AG04450 (cell line): ENCODE measurements at regions of chr1 and their contacts with region 1.

Region 1: GRCh38 chr1:174743654-174744561 is 255.8 kb upstream of the CACYBP start:
- DNase-seq: peak; percentile 33
- H3K4me3 ChIP-seq: no peak overlapping the region
- H3K27ac ChIP-seq: no peak overlapping the region
- H3K27me3 ChIP-seq: no peaks in the 10 kb centered on the region
- CTCF ChIP-seq: peak; percentile 67

Region 2: DNA sequence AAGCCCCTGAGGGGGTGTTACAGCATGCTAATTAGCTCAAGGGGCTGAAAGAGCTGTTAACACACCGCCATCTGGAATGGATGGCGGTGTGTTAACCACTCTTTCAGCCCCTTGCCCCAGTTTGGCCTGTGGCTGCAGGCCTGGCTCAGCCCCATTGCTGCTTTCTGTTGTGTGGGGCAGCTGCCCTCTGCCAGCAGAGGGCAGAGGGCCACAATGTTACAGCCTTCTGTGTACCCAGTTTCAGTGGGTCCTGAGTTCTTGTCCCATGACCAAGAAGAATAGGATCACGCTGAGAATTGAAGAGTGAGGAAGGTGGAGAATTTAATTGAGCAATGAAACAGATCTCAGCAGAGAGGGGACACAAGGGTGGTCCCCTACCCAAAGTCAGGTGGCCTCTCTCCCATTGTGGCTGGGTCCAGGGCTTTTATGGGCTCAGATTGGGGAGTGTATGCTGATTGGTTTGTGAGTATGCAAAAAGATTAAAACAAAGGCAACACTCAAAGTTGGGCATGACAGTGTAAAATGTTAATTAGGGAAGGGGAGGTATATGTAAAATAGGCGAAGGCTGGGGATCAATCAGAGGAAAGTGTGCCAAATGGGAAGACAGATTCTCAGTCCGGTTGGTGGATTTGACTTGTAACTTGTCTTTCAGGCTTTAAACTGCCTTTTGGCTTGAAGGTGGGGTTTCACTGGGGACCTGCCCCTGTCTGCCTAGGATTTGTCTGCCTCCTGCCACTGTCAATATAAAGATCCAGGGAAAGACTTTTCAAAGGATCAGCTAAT is 442.4 kb before region 1 on chr1:
- CTCF ChIA-PET with region 1: interaction called, 11 read pairs
- POLR2A ChIA-PET with region 1: no interaction called
- DNase-seq: no peak
- H3K4me3 ChIP-seq: no peak overlapping the region
- H3K27ac ChIP-seq: no peak overlapping the region
- H3K27me3 ChIP-seq: no peaks in the 10 kb centered on the region
- CTCF ChIP-seq: no peak

Region 3: GRCh38 chr1:174942547-174943255 is 198.8 kb after region 1 on chr1:
- CTCF ChIA-PET with region 1: no interaction called
- POLR2A ChIA-PET with region 1: no interaction called
- DNase-seq: no peak
- H3K4me3 ChIP-seq: no peak overlapping the region
- H3K27ac ChIP-seq: no peak overlapping the region
- H3K27me3 ChIP-seq: no peaks in the 10 kb centered on the region
- CTCF ChIP-seq: no peak